Activated CD4-positive, alpha-beta T cell treated with anti-CD3 and anti-CD28 coated beads for 36 hours (primary cell): ENCODE measurements at regions of chr1 and their contacts with region 1.

Region 1: GRCh38 chr1:95233737-95234500 is at the start of gene RWDD3:
- DNase-seq: peak; percentile 96
- ATAC-seq: peak; percentile 96
- H3K4me3 Mint-ChIP-seq: peak within 1 kb of the TSS; percentile 86
- H3K27ac Mint-ChIP-seq: peak within 1 kb of the TSS; percentile 91
- H3K4me1 Mint-ChIP-seq: peaks cover 38% of the 10 kb centered on the region
- H3K27me3 Mint-ChIP-seq: peaks cover 6% of the 10 kb centered on the region
- total RNA-seq, gene RWDD3: 10.5 to 14.3 TPM

Region 2: GRCh38 chr1:94417978-94418663 is 815.8 kb before region 1 on chr1 and contains the start of gene ABCD3:
- CTCF ChIA-PET with region 1: no interaction called
- POLR2A ChIA-PET with region 1: no interaction called
- intact Hi-C with region 1: loop called (anchors 2 to 5 kb)
- DNase-seq: peak; percentile 98
- ATAC-seq: peak; percentile 91
- H3K4me3 Mint-ChIP-seq: no peak within 1 kb of the TSS
- H3K27ac Mint-ChIP-seq: peak within 1 kb of the TSS; percentile 87
- H3K4me1 Mint-ChIP-seq: peaks cover 29% of the 10 kb centered on the region
- H3K27me3 Mint-ChIP-seq: peaks cover 6% of the 10 kb centered on the region
- total RNA-seq, gene ABCD3: 46.1 to 67.1 TPM

Region 3: GRCh38 chr1:94854458-94855306 is 379.2 kb before region 1 on chr1:
- CTCF ChIA-PET with region 1: interaction called, 10 read pairs
- POLR2A ChIA-PET with region 1: interaction called, 3 read pairs
- intact Hi-C with region 1: loop called (anchors 1 to 2 kb)
- DNase-seq: peak; percentile 90
- ATAC-seq: peak; percentile 95
- H3K4me3 Mint-ChIP-seq: no peak overlapping the region
- H3K27ac Mint-ChIP-seq: no peak overlapping the region
- H3K4me1 Mint-ChIP-seq: no peaks in the 10 kb centered on the region
- H3K27me3 Mint-ChIP-seq: peaks cover 4% of the 10 kb centered on the region

Region 4: GRCh38 chr1:94962409-94963265 is 271.3 kb before region 1 on chr1:
- CTCF ChIA-PET with region 1: no interaction called
- POLR2A ChIA-PET with region 1: no interaction called
- intact Hi-C with region 1: loop called (anchors 5 to 10 kb)
- DNase-seq: peak; percentile 42
- ATAC-seq: peak; percentile 88
- H3K4me3 Mint-ChIP-seq: peak overlapping the region; percentile 74
- H3K27ac Mint-ChIP-seq: peak overlapping the region; percentile 94
- H3K4me1 Mint-ChIP-seq: peaks cover 4% of the 10 kb centered on the region
- H3K27me3 Mint-ChIP-seq: no peaks in the 10 kb centered on the region

Region 5: GRCh38 chr1:95084317-95085176 is 149.4 kb before region 1 on chr1:
- CTCF ChIA-PET with region 1: interaction called, 4 read pairs
- POLR2A ChIA-PET with region 1: no interaction called
- intact Hi-C with region 1: loop called in 1 of 2 experiments (anchors 1 kb)
- DNase-seq: peak; percentile 30
- ATAC-seq: peak; percentile 63
- H3K4me3 Mint-ChIP-seq: no peak overlapping the region
- H3K27ac Mint-ChIP-seq: no peak overlapping the region
- H3K4me1 Mint-ChIP-seq: no peaks in the 10 kb centered on the region
- H3K27me3 Mint-ChIP-seq: peaks cover 10% of the 10 kb centered on the region

Region 6: DNA sequence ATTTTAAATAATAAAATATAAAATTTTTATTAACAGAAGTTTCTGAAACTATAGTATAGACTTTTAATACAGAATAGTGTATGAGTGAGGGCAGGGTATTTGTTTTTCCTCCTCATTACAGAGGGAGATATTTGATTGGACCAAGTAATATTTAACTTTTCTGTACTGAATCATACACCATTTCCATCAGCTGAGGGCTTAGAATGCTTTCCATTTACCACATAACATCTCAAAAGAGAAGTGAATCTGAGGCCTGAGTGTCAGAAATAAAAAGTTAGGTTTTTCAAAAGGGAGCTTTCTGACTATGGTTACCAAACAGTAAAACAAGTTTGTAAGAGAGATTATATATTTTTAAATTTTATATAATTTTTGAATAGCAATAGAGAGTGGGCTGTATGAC is 87.3 kb before region 1 on chr1:
- CTCF ChIA-PET with region 1: no interaction called
- POLR2A ChIA-PET with region 1: interaction called, 10 read pairs
- intact Hi-C with region 1: no loop called
- DNase-seq: no peak
- ATAC-seq: no peak
- H3K4me3 Mint-ChIP-seq: no peak overlapping the region
- H3K27ac Mint-ChIP-seq: no peak overlapping the region
- H3K4me1 Mint-ChIP-seq: no peaks in the 10 kb centered on the region
- H3K27me3 Mint-ChIP-seq: peaks cover 5% of the 10 kb centered on the region

Region 7: GRCh38 chr1:95396557-95396956 is 162.6 kb after region 1 on chr1:
- CTCF ChIA-PET with region 1: no interaction called
- POLR2A ChIA-PET with region 1: no interaction called
- intact Hi-C with region 1: no loop called
- DNase-seq: no peak
- ATAC-seq: no peak
- H3K4me3 Mint-ChIP-seq: no peak overlapping the region
- H3K27ac Mint-ChIP-seq: no peak overlapping the region
- H3K4me1 Mint-ChIP-seq: no peaks in the 10 kb centered on the region
- H3K27me3 Mint-ChIP-seq: peaks cover 4% of the 10 kb centered on the region